ENCODE measurements at regions of chr16 and their contacts with region 1.

Region 1: GRCh38 chr16:84617791-84618580 is at the start of gene COTL1:
- DNase-seq: peak; percentile 86
- ATAC-seq: peak; percentile 87
- H3K4me3 Mint-ChIP-seq: peak within 1 kb of the TSS; percentile 94
- H3K27ac Mint-ChIP-seq: peak within 1 kb of the TSS; percentile 84
- H3K4me1 Mint-ChIP-seq: peaks cover 77% of the 10 kb centered on the region
- H3K27me3 Mint-ChIP-seq: no peaks in the 10 kb centered on the region
- CTCF ChIP-seq: no peak
- total RNA-seq, gene COTL1: 487 and 525 TPM in 2 replicates

Region 2: DNA sequence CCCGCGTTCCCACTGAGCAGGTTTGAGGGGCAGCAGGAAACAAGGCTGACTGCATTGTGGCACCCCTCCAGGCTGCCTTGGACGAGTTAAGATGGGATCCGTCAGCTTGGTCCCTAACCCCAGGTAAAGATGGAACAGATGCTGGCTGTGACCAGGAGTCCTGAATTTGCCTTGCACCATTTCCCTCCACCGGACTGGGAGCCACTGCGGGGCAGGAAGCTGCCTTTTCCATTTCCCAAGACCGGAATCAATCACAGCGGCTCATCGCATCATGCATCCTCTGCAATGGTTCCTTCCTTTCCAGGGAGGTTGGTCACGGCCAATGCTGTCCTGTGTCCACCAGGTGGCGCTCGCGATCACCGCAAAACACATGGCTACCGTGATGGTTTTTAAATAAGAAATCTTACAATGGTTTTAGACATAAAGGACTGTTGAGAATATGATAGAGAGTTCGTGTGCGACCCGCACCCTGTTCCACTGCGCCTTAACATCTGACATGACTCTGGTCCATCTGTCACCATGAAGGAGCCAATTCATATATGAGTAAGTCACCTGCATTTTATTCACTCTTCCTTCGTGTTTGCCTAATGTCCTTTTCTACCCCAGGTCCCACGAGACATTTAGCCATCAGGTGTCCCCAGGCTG is 106.7 kb before region 1 on chr16:
- CTCF ChIA-PET with region 1: interaction called, 166 read pairs
- POLR2A ChIA-PET with region 1: interaction called, 28 read pairs
- intact Hi-C with region 1: loop called (anchors 1 kb)
- DNase-seq: peak; percentile 80
- ATAC-seq: peak; percentile 26
- H3K4me3 Mint-ChIP-seq: peak overlapping the region; percentile 19
- H3K27ac Mint-ChIP-seq: peak overlapping the region; percentile 68
- H3K4me1 Mint-ChIP-seq: peaks cover 59% of the 10 kb centered on the region
- H3K27me3 Mint-ChIP-seq: no peaks in the 10 kb centered on the region
- CTCF ChIP-seq: peak; percentile 92

Region 3: DNA sequence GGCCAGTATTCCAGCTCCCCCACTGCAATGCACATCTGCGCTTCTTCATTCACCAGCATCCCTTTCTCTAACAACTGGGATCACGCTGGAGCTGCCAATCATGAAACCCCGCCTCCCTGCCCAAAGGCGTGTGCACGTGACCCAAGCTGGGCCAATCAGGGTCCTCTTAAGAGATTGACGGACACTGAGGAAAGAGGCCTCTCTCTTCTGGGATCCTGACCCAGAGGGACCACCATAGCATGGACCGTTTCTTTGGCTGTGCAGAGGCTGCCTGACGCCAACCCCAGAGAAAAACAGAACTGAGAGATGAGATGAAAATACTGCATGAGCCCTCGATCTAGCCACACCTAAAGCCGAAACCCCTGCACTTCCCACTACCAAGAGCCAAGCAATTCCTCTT is 32.1 kb before region 1 on chr16:
- CTCF ChIA-PET with region 1: interaction called, 20 read pairs
- POLR2A ChIA-PET with region 1: interaction called, 18 read pairs
- intact Hi-C with region 1: loop called (anchors 1 kb)
- DNase-seq: no peak
- ATAC-seq: peak; percentile 88
- H3K4me3 Mint-ChIP-seq: peak overlapping the region; percentile 82
- H3K27ac Mint-ChIP-seq: peak overlapping the region; percentile 91
- H3K4me1 Mint-ChIP-seq: peaks cover 66% of the 10 kb centered on the region
- H3K27me3 Mint-ChIP-seq: no peaks in the 10 kb centered on the region
- CTCF ChIP-seq: no peak

Region 4: DNA sequence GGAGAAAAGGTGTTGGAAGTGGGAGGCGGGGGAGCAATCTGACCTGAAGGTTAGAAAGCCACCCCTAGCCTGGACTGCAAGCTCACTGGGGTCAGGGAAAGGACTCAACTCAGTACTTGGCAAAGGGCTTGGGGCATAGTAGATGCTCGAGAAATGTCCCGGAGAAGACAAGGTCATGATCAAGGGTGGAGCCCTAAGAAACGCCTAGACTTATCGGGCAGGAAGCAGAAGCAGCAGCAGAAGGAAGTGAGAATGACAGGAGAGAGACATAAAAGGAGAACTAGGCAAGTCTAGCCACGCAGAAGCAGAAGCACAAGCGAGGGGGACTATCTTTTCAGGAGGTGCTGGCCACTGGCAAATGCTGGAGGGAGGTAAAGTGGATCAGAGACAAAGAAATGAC is 10.3 kb before region 1 on chr16:
- CTCF ChIA-PET with region 1: interaction called, 3 read pairs
- POLR2A ChIA-PET with region 1: interaction called, 333 read pairs
- intact Hi-C with region 1: loop called (anchors 1 kb)
- DNase-seq: no peak
- ATAC-seq: peak; percentile 72
- H3K4me3 Mint-ChIP-seq: peak overlapping the region; percentile 76
- H3K27ac Mint-ChIP-seq: peak overlapping the region; percentile 95
- H3K4me1 Mint-ChIP-seq: peaks cover 94% of the 10 kb centered on the region
- H3K27me3 Mint-ChIP-seq: no peaks in the 10 kb centered on the region
- CTCF ChIP-seq: no peak

Region 5: GRCh38 chr16:84631886-84632285 is 13.9 kb after region 1 on chr16:
- CTCF ChIA-PET with region 1: no interaction called
- POLR2A ChIA-PET with region 1: no interaction called
- intact Hi-C with region 1: no loop called
- DNase-seq: no peak
- ATAC-seq: no peak
- H3K4me3 Mint-ChIP-seq: no peak overlapping the region
- H3K27ac Mint-ChIP-seq: no peak overlapping the region
- H3K4me1 Mint-ChIP-seq: peaks cover 29% of the 10 kb centered on the region
- H3K27me3 Mint-ChIP-seq: no peaks in the 10 kb centered on the region
- CTCF ChIP-seq: no peak

Region 6: GRCh38 chr16:84672276-84673202 is 54.6 kb after region 1 on chr16:
- CTCF ChIA-PET with region 1: interaction called, 7 read pairs
- POLR2A ChIA-PET with region 1: no interaction called
- intact Hi-C with region 1: loop called (anchors 2 kb)
- DNase-seq: peak; percentile 75
- ATAC-seq: peak; percentile 91
- H3K4me3 Mint-ChIP-seq: no peak overlapping the region
- H3K27ac Mint-ChIP-seq: no peak overlapping the region
- H3K4me1 Mint-ChIP-seq: peaks cover 9% of the 10 kb centered on the region
- H3K27me3 Mint-ChIP-seq: no peaks in the 10 kb centered on the region
- CTCF ChIP-seq: peak; percentile 90

Region 7: GRCh38 chr16:84952335-84953189 is 334.6 kb after region 1 on chr16:
- CTCF ChIA-PET with region 1: interaction called, 7 read pairs
- POLR2A ChIA-PET with region 1: no interaction called
- intact Hi-C with region 1: loop called (anchors 1 kb)
- DNase-seq: peak; percentile 39
- ATAC-seq: peak; percentile 93
- H3K4me3 Mint-ChIP-seq: no peak overlapping the region
- H3K27ac Mint-ChIP-seq: no peak overlapping the region
- H3K4me1 Mint-ChIP-seq: peaks cover 5% of the 10 kb centered on the region
- H3K27me3 Mint-ChIP-seq: peaks cover 12% of the 10 kb centered on the region
- CTCF ChIP-seq: peak; percentile 40